Lower leg skin (tissue), 4 donors: ENCODE measurements at regions of chr1 and their contacts with region 1.

Region 1: DNA sequence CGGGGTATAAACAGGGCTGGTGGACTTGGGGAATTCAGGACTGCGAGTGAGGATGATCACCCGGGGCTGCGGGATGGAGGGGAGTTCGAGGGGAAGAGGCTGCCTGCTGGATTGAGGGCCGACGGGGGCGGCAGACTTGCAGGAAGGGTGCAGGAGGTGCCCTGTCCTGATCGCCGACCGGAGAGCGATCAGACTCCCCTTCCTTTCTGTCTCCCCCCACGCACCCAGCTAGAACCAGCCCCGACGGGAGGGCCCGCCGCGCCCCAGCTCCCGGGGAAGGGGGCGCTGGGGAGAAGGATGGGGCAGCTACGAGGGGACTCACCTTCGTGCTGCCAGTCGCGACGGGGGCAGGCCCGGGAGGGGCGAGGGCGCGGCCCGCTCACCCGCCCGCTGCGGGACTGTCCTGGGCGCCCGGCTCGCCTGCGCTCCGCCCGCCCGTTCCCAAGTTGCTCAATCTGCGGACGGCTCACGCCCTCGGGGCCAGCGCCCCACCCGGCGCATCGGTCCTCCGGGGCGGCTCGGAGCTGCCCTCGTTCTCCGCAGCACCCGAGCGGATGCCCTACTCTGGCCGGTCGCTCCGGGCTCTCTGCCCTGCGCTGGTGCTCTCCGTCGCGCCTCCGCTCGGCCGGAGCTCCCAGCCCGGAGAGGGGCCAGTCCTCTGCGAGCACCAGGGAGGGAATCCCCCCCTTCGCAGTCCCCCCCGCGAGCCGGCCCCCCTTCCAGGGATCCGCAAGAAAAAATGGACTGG is at the start of gene RSPO1:
- DNase-seq: no peak
- H3K4me3 ChIP-seq: no peak within 1 kb of the TSS
- CTCF ChIP-seq: no peak
- POLR2A ChIP-seq: no peak
- total RNA-seq, gene RSPO1: 1.1 to 9.4 (median 6.2) TPM

Region 2: DNA sequence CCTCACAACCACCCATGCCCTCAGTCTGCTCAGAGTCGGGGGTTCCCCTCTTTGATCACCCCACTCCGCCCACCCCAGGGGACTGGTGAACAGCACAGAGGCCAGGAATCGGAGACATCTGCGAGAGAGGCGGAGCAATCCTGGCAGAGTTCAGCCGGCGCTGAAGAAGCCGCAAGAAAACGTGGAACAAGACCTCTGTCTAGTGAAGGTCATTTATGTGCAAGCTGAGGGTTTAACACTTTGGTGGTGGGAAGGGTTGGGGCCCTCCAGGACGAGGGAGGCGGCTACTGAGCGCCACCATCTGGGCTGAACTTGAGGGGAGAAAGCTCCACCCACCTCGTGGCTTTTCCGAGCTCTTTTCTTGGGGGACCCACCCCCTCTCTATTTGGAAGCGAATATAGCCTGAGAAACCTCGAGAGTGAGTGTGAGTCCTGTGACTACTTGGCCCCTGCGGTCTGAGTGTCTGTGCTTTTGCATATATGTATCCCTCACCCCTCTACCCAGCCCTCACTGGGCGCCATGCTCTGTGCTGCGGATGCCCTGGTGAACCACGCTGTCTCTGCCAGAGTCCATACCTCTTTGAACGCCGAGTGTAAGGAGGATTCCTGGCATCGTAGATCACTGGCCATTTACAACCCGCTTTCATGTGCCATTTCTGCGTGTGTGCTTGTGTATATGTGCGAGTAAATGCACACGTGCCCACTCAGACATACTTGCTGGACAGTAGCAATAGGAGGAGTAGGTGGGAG is 131.7 kb after region 1 on chr1:
- intact Hi-C with region 1: no loop called
- DNase-seq: peak in 1 of 2 donors; percentile 75
- H3K4me3 ChIP-seq: no peak overlapping the region
- CTCF ChIP-seq: no peak
- POLR2A ChIP-seq: no peak

Region 3: DNA sequence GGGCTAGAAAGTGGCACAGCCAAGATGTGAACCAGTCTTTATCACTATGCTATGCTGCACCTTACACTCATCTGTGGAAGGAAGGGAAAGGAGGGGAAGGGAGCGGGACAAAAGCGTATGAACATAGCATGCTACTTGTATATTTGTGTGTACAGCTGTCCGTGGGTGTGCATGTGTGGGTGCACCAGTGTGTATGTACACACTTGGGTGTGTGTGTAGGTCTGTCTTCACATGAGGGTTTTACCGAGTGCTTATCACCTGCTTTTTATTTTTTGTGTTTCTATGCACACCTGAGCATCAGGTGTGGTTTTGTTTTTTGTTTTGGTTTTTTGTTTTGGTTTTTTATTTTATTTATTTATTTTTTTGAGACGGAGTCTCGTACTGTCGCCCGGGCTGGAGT is 969.5 kb after region 1 on chr1:
- intact Hi-C with region 1: loop called (anchors 5 kb)
- DNase-seq: peak in 1 of 2 donors; percentile 43
- H3K4me3 ChIP-seq: no peak overlapping the region
- CTCF ChIP-seq: no peak
- POLR2A ChIP-seq: no peak